Activated CD4-positive, alpha-beta T cell treated with anti-CD3 and anti-CD28 coated beads, Interleukin-2, amount 10 ng/mL, durations not matched to agents 24 days and 14 days (primary cell): ENCODE measurements at regions of chr16 and their contacts with region 1.

Region 1: DNA sequence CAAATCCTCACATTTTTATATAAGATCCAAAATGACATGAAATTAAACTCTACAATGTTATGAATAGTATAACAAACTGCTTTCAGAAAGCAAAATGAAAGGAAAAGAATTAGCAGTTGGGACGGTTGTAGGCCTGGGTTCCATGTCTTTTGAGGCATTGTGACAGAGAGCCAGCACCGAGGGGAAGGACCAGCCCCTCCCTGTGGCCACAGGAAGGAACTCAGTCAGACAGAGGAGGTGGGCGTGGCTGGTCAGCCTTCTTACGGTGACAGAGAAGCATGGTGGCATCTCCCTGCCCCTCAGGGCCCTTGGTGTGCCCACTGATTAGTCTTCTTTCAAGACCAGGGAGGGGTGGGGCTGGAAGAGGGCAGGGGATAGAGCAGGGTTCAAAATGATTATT is 5.7 kb downstream of the ZNF319 start:
- DNase-seq: peak; percentile 85
- H3K4me3 Mint-ChIP-seq: peak overlapping the region; percentile 28
- H3K27ac Mint-ChIP-seq: no peak overlapping the region
- H3K4me1 Mint-ChIP-seq: peaks cover 32% of the 10 kb centered on the region
- H3K27me3 Mint-ChIP-seq: no peaks in the 10 kb centered on the region

Region 2: DNA sequence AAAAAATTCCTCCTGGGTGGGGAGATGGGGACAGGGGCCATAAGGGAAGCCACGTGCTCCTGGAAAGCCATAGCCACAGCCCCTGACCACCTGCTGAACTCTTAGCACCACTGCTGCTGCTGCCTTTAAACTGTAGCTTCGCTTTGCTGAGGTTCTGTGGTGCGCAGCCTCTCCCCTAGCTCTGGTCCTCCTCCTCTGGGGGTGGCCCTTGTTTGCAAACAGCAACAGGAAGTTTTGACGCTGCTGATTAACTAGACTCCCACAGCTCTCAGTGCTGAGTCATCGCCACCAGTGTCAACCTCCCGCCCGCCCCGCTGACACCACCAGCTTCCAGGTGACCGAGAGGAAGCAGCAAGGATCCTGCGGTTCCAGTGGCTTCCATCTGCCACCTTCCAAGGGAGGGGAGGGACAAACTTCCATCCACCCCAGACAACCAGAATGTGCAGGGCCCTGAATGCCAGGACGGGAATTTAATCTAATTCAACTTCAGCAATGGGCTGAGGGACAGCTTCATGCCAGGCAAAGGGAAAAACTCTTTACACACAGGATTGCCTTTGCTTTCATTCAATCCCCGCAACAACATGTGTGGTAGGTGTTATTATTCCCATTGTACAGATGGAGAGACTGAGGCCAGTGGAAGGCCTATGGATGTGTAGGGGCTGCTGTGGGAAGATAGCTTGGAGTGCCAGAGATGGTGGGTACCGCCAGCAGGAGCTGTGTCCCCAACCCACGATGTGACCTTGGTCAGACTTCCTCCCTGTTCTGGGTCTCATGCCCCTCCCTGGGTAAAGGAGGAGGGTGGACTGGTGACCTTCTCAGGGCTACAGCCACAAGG is 184.4 kb before region 1 on chr16:
- intact Hi-C with region 1: loop called (anchors 5 kb)
- DNase-seq: peak; percentile 94
- H3K4me3 Mint-ChIP-seq: peak overlapping the region; percentile 65
- H3K27ac Mint-ChIP-seq: peak overlapping the region; percentile 85
- H3K4me1 Mint-ChIP-seq: peaks cover 34% of the 10 kb centered on the region
- H3K27me3 Mint-ChIP-seq: peaks cover 22% of the 10 kb centered on the region

Region 3: DNA sequence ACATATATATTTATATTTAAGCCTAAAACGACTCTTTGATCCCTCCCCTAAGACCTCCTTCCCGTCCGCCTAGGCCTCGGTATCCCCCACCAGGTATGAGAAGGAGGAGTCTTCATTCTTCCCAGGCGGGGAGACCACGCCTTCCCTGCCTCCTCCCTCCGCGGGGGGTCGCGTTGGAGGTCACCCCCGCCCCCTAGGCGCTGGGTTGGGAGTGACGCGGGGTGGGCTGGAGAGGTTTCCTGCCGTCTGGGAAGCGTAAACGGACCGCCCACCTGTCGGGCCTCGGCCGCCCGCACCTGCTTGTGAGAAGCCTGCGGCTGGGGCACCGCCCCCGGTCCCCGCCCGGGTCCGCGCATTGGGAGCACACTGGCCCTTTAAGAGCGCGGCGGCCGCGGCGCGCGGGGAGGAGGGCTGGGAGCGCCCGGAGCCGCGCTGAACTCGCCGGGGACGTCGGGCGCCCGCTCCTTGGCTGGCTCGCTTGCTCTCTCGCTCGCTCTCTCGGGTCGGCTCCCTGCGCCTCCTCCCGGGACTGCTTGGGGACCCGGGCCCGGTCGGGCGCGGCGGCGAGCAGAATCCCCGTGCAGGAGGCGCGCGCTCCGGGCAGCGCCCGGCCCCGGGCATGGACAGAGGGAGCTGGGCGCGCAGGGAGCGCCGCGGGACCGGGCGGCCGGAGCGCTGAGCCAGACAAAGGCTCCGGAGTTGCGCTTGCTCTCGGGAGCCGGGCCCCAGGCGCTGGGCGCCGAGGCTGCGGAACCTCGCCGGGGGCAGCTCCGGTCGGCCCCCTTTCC is 30.8 kb after region 1 on chr16 and contains the start of gene MMP15:
- intact Hi-C with region 1: no loop called
- DNase-seq: peak; percentile 89
- H3K4me3 Mint-ChIP-seq: peak within 1 kb of the TSS; percentile 88
- H3K27ac Mint-ChIP-seq: peak within 1 kb of the TSS; percentile 70
- H3K4me1 Mint-ChIP-seq: peaks cover 12% of the 10 kb centered on the region
- H3K27me3 Mint-ChIP-seq: peaks cover 26% of the 10 kb centered on the region
- total RNA-seq, gene MMP15: 0.89 and 1.1 TPM in 2 replicates